Aorta (tissue), 5 donors: ENCODE measurements at regions of chr11 and their contacts with region 1.

Region 1: DNA sequence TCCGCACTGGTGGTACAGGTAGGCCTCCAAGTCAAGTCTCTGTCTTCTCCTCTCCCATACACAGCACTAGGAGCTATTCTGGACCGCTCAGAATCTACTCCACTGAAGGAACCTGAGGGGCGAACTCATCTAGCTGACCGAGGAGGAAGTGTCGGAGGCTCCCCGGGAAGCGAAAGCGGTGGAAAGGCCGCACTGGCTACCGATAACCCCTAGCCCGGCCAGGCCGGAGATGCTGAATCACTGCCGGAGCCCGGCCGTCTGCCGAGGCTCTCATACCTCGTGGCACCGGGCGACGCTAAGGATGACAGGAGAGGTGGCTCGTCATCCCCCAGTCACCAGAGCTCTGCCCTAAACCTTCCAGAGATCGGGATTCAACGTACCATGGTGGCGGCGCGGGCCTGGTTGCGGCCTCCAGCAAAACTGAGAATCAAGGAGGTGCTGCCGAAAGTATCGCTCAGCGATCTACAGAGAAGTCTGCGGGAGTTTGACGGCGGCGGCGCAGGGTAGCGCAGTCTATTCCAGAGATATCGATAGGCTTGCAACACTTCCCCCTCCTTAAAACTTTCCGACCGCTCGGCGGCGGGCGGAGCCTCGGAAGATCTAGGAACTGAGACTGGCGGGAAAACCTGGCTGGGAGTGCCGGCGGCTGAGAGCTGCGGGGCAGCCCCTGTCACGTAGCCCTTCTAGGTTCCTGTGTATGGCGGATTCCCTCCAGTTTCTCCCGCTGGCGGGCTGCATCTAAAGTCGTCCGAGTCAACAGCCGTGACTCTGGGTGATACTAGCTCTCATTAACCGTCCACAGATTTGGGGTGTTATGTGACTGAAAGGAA is at the start of gene PSMA1:
- DNase-seq: peak; percentile 98
- ATAC-seq: peak; percentile 100
- H3K4me3 ChIP-seq: peak within 1 kb of the TSS; percentile 60 to 95
- H3K27ac ChIP-seq: peak within 1 kb of the TSS in 1 of 2 donors; percentile 91
- H3K4me1 ChIP-seq: peaks cover 0 to 4% of the 10 kb centered on the region in 2 donors
- H3K27me3 ChIP-seq: no peaks in the 10 kb centered on the region
- total RNA-seq, gene PSMA1: 117 to 122 TPM

Region 2: GRCh38 chr11:14537134-14537599 is 17.0 kb after region 1 on chr11:
- intact Hi-C with region 1: loop called in 1 of 2 experiments (anchors 2 kb)
- DNase-seq: peak in 1 of 2 donors; percentile 47
- ATAC-seq: peak; percentile 62
- H3K4me3 ChIP-seq: no peak overlapping the region
- H3K27ac ChIP-seq: no peak overlapping the region
- H3K4me1 ChIP-seq: peaks cover 0 to 3% of the 10 kb centered on the region in 2 donors
- H3K27me3 ChIP-seq: no peaks in the 10 kb centered on the region

Region 3: DNA sequence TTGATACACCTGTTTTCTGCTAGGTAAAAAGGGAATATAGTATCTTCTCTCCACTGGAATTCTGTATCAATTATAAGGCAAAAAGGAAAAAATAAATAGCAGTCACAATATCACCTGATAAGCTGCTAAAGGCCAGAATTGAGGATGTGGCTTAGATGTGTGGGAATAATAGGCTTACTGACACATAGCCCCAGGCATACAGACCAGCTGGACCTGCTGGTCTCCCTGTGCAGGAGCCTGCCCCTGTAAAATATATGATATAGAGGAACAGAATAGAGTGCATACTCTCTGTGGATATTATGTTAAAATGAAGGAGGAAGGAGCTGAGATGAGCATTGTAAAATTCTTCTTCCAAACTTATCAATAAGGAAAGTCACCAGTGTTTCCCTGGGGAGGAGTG is 86.6 kb after region 1 on chr11:
- intact Hi-C with region 1: no loop called
- DNase-seq: no peak
- ATAC-seq: no peak
- H3K4me3 ChIP-seq: no peak overlapping the region
- H3K27ac ChIP-seq: no peak overlapping the region
- H3K4me1 ChIP-seq: no peaks in the 10 kb centered on the region
- H3K27me3 ChIP-seq: peaks cover 0 to 2% of the 10 kb centered on the region in 2 donors

Region 4: GRCh38 chr11:14643697-14644225 is 123.6 kb after region 1 on chr11 and contains the start of gene PDE3B:
- intact Hi-C with region 1: loop called in 1 of 2 experiments (anchors 5 kb)
- DNase-seq: peak; percentile 89 to 95
- ATAC-seq: peak; percentile 89
- H3K4me3 ChIP-seq: peak within 1 kb of the TSS; percentile 43 to 79
- H3K27ac ChIP-seq: peak within 1 kb of the TSS; percentile 67 to 69
- H3K4me1 ChIP-seq: peaks cover 0 to 5% of the 10 kb centered on the region in 2 donors
- H3K27me3 ChIP-seq: no peaks in the 10 kb centered on the region
- total RNA-seq, gene PDE3B: 12.3 to 15.1 TPM

Region 5: DNA sequence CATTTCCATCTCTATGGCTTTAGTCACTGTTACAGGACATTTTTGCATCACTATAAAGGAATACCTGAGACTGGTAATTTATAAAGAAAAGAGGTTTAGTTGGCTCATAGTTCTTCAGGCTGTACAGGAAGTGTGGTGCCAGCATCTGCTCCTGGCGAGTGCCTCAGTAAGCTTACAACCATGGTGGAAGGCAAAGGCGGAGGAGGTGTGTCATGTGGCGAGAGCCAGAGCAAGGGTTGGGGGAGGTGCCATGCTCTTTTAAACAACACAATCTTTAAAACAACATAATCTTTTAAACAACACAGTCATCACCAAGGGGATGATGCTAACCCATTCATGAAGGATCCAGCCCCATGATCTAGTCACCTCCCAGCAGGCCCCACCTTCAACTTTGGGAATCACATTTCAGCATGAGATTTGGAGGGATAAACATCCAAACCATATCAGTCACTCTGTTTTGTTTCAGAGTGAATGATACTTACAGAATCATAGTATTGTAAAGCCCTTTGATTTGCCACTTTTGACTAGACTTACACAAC is 226.8 kb after region 1 on chr11:
- intact Hi-C with region 1: no loop called
- DNase-seq: no peak
- ATAC-seq: no peak
- H3K4me3 ChIP-seq: no peak overlapping the region
- H3K27ac ChIP-seq: no peak overlapping the region
- H3K4me1 ChIP-seq: no peaks in the 10 kb centered on the region
- H3K27me3 ChIP-seq: no peaks in the 10 kb centered on the region